ENCODE measurements at regions of chr2 and their contacts with region 1.

Region 1: DNA sequence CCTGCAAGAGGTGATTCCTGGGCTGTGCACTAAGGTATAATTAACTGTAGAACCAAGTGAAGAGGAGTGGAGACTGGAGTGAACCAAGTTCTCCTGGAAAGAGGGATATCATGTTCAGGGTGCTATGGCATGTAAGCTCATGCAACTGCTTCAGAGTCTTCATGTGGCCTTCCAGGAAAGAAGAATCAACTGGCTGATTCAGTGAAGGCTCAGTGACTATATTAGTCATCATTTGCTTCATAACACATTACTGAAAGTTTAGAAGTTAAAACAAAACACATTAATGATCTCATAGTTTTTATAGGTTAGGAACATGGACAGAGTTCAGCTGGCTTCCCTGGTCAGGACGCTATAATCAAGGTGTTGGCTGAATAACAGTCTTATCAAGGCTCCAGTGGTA is 1200.8 kb upstream of the GYPC start:
- DNase-seq: no peak
- CTCF ChIP-seq: no peak

Region 2: GRCh38 chr2:125444106-125444505 is 11.0 kb before region 1 on chr2:
- CTCF ChIA-PET with region 1: interaction called, 10 read pairs
- POLR2A ChIA-PET with region 1: no interaction called
- DNase-seq: no peak
- CTCF ChIP-seq: no peak

Region 3: DNA sequence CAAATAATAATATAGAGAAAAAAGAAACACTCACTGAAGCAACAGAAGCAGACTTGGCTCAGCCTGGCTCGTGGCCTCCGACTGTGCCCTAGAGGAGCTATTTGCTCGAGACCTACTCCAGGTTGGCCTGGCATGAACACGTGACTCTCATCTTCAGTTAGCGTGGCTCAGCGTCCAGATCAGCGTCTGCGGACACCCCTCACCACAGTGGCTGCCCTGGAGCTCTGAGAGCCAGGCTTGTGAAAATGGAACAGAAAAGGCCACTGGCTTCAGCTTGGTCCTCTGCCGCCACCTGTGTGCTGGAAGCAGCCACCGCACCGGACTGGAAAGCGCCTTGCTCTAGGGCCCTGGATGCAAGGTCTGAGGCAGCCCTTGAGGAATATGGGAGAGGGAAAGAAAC is 16.9 kb after region 1 on chr2:
- CTCF ChIA-PET with region 1: interaction called, 10 read pairs
- POLR2A ChIA-PET with region 1: no interaction called
- DNase-seq: peak; percentile 67
- CTCF ChIP-seq: peak; percentile 76

Region 4: GRCh38 chr2:125643585-125643984 is 188.5 kb after region 1 on chr2:
- CTCF ChIA-PET with region 1: no interaction called
- POLR2A ChIA-PET with region 1: no interaction called
- DNase-seq: no peak
- CTCF ChIP-seq: no peak